ENCODE measurements at regions of chr18 and their contacts with region 1.

Region 1: DNA sequence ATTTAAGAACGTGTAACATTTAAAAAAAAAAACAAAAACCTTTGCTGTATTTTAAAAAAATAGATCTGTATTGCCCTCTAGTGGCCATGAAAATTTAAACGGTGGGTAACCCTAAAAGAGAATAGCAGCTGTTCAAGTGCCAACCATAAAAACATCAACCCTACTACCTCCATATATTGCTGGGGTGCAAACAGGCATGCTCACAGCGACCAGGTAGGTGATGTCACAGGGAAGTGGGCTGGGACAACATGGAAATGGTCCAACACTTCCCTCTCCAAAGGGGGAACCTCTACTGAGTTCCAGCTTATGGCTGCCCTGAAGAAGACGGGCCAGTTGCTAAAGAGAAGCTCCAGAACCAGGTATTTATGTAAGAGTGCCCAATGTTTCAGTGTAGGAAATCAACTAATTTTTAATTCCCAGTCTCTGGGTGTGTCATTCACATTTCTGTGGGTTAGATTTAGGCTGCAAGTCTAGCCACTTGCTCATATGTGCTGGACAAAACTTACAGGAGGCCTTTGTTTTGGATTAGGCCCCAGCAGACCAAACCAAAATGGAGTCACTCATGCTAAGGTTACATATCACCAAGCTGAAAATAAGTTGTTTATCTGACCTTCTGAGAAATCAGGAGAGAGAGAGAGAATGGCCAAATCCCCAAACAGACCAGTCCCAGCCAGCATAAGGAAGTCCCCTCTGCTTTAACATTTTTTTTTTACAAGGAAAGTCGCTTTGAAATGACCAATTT is 54.5 kb downstream of the SKA1 start:
- H3K4me3 ChIP-seq: no peak overlapping the region
- H3K27ac ChIP-seq: no peak overlapping the region
- H3K4me1 ChIP-seq: no peaks in the 10 kb centered on the region
- CTCF ChIP-seq: no peak

Region 2: DNA sequence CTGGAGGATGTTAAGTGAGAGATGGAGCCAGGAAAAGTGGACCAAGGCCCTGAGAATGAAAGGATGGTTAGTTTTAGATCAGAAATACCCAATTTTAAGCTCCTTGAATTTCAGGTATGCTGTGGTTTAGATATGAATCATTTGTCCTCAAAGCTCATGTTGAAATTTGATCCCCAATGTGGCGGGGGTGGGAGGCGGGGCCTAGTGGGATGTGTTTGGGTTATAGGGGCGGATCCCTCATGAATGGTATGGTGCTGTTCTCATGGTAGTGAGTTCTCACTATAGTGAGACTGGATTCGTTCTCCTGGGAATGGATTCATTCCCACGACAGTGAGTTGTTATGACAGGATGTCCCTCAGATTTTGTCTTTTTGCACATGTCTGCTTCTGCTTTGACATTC is 245.8 kb before region 1 on chr18:
- CTCF ChIA-PET with region 1: no interaction called
- POLR2A ChIA-PET with region 1: no interaction called
- H3K4me3 ChIP-seq: no peak overlapping the region
- H3K27ac ChIP-seq: no peak overlapping the region
- H3K4me1 ChIP-seq: peaks cover 12% of the 10 kb centered on the region; the same call in 1 of the 2 replicates
- CTCF ChIP-seq: no peak

Region 3: DNA sequence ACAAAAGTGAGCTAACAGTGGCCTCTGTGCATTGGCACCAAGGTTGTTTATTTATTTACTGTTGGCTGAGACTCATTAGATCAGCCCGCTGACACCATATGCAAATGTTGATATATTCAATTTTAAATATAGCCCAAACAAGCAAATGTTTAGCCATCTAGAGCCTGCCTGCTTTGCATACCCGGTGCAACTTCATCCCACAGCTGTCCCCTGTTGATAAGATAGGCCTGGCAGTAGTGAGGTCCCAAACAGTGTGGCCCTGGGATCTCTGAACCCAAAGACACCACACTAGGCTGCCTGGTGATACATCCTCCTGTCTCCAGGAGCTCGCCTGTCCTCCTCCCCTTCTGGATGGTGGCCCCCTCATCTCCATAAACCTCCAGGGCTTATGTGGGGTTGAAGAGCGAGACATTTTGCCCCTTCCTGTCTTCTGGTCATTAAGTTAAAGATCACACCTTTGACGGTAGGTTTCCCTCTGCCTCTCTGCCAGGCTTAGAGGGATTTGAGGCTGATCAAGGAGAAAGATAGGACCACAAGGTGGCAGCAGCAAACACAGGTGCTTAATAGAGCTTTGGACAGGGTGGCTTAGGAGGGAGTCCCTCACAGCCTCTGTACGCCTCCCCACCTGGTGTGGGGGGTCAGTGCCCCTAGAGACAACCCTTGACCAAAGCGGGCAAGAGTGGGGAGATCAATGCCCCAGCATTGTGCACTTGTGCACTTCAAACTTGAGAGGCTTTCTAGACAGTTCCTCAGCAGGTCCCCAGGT is 210.8 kb before region 1 on chr18:
- CTCF ChIA-PET with region 1: interaction called, 17 read pairs
- POLR2A ChIA-PET with region 1: no interaction called
- H3K4me3 ChIP-seq: no peak overlapping the region
- H3K27ac ChIP-seq: no peak overlapping the region
- H3K4me1 ChIP-seq: no peaks in the 10 kb centered on the region
- CTCF ChIP-seq: peak; percentile 63; the same call in 1 of the 2 replicates

Region 4: DNA sequence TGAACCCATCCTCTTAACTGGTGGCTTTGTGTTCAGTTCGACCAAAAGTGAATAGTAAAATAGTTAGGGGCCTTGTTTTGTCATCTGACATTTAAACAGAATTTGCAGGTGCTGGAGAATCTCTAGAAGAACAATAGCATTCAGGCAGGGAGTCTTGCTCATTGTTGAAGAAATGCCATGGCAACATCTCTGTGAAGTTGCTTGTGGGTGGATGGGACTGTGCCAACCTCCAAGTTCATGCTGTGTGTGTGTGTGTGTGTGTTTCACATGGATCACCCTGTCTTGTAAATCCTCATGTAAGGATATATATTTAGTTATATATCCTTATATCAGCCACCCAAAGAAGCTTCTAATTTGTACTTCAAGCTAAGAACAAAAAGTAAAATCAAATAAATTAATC is 12.1 kb after region 1 on chr18:
- CTCF ChIA-PET with region 1: interaction called, 20 read pairs
- POLR2A ChIA-PET with region 1: no interaction called
- H3K4me3 ChIP-seq: no peak overlapping the region
- H3K27ac ChIP-seq: no peak overlapping the region
- H3K4me1 ChIP-seq: no peaks in the 10 kb centered on the region
- CTCF ChIP-seq: no peak

Measured in HEK293 (cell line).